ENCODE measurements at regions of chr14 and their contacts with region 1.

Region 1: DNA sequence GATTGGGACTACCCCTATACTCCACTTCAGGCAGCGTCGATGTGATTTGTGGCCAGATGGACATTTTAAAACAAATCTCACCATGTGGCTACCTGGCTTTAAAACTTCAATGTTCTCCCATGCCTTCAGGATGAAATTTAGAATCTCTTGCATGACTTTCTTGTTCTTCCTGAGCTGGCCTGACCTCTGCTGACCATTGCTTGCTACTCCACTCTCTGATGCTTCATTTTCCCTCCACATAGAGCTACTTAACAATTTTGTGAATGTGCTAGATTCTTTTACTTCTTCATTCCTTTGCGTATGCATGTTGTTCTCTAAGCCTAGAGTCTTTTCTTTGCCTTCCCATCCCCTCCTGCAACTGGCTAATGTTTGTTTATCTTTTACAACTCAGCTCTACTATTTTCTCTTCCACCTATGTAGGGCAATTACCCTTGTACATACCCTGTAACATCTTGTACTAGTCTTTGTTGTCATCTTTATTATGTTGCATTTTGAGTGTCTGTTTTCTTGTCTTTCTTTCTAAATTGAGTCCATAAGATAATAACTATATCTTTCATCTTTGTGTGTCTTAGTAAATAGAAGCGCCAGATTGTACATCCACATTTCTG is 41.2 kb downstream of the YLPM1 start:
- DNase-seq: peak; percentile 59 to 65
- H3K4me3 ChIP-seq: no peak overlapping the region
- H3K27ac ChIP-seq: no peak overlapping the region
- H3K4me1 ChIP-seq: no peaks in the 10 kb centered on the region
- H3K27me3 ChIP-seq: no peaks in the 10 kb centered on the region
- CTCF ChIP-seq: peak; percentile 89

Region 2: GRCh38 chr14:74324931-74325361 is 479.4 kb before region 1 on chr14:
- CTCF ChIA-PET with region 1: no interaction called
- POLR2A ChIA-PET with region 1: no interaction called
- intact Hi-C with region 1: loop called (anchors 1 kb)
- DNase-seq: peak in 1 of 2 experiments; percentile 39
- H3K4me3 ChIP-seq: no peak overlapping the region
- H3K27ac ChIP-seq: no peak overlapping the region
- H3K4me1 ChIP-seq: no peaks in the 10 kb centered on the region
- H3K27me3 ChIP-seq: no peaks in the 10 kb centered on the region
- CTCF ChIP-seq: peak; percentile 95

Region 3: DNA sequence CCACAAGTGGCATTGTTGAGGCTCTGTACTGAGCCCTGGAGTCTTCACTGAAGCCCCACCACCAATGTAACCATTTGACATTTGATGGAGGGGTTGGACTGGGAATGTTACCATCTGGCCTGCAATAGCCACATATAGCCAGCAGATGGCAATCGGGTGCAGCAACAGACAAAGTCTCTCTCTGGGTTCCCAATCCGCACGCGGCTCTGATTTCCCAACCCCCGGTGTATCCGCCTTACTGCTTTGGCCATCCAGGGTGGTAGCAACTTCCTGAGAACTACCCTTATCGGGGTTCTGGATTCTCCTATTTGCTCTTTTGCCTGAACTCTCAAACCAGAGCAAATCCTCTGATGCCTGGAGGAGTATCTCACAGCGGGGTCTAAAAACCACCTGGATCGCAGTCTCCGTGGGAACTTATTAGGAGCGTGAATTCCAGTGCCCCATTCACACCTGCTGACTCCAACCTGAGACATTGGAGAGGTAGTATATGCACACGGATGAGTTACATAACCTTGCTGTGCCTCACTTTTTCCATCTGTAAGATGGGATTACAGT is 441.9 kb before region 1 on chr14:
- CTCF ChIA-PET with region 1: no interaction called
- POLR2A ChIA-PET with region 1: no interaction called
- intact Hi-C with region 1: loop called (anchors 1 kb)
- DNase-seq: peak; percentile 72 to 92
- H3K4me3 ChIP-seq: no peak overlapping the region
- H3K27ac ChIP-seq: no peak overlapping the region
- H3K4me1 ChIP-seq: no peaks in the 10 kb centered on the region
- H3K27me3 ChIP-seq: no peaks in the 10 kb centered on the region
- CTCF ChIP-seq: peak; percentile 100

Region 4: GRCh38 chr14:74501135-74501614 is 303.1 kb before region 1 on chr14:
- CTCF ChIA-PET with region 1: no interaction called
- POLR2A ChIA-PET with region 1: no interaction called
- intact Hi-C with region 1: loop called (anchors 2 kb)
- DNase-seq: peak in 1 of 2 experiments; percentile 42
- H3K4me3 ChIP-seq: no peak overlapping the region
- H3K27ac ChIP-seq: no peak overlapping the region
- H3K4me1 ChIP-seq: peaks cover 11% of the 10 kb centered on the region
- H3K27me3 ChIP-seq: no peaks in the 10 kb centered on the region
- CTCF ChIP-seq: peak; percentile 47; the same call in 1 of the 2 replicates

Region 5: DNA sequence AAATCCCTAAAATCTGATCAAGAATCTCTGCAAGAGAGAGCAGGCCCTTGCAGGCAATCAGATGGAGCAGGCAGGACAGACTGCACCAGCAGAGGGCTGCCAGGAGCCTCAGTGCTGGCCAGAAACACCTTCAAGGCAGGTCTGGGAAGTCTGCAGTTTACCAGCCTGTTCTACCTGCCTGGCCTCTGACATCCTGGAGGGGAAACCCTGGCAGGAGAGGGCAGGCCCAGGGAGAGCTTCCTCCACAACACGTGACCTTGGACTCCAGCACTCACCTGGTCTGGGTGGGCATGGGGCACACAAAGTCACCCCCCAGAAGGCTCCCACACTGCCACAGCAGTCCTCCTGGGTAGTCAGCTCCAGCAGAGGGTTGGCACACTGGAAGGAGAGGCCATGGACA is 254.7 kb before region 1 on chr14:
- CTCF ChIA-PET with region 1: interaction called, 7 read pairs
- POLR2A ChIA-PET with region 1: no interaction called
- intact Hi-C with region 1: loop called (anchors 1 kb)
- DNase-seq: peak; percentile 74 to 85
- H3K4me3 ChIP-seq: no peak overlapping the region
- H3K27ac ChIP-seq: peak overlapping the region; percentile 14
- H3K4me1 ChIP-seq: peaks cover 13% of the 10 kb centered on the region
- H3K27me3 ChIP-seq: no peaks in the 10 kb centered on the region
- CTCF ChIP-seq: peak; percentile 88

Region 6: DNA sequence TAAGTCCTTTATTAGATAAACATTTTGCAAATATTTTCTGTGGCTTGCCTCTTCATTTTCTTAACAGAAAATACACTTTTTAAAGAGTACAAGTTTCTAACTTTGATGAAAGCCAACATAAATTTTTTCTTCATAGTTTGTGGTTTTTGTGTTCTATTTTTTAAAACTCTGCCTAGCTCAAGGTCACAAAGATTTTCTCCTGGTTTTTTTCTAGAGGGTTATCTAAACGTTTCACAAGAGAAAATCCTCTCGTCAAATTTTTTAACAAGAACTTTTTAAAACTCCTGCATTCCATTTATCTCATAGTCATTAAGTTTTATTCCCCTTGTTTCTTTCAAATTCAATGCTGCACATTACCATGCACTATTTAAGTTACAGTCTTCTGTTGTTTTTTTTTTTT is 99.7 kb before region 1 on chr14:
- CTCF ChIA-PET with region 1: no interaction called
- POLR2A ChIA-PET with region 1: no interaction called
- intact Hi-C with region 1: no loop called
- DNase-seq: no peak
- H3K4me3 ChIP-seq: no peak overlapping the region
- H3K27ac ChIP-seq: no peak overlapping the region
- H3K4me1 ChIP-seq: no peaks in the 10 kb centered on the region
- H3K27me3 ChIP-seq: no peaks in the 10 kb centered on the region
- CTCF ChIP-seq: no peak

Region 7: DNA sequence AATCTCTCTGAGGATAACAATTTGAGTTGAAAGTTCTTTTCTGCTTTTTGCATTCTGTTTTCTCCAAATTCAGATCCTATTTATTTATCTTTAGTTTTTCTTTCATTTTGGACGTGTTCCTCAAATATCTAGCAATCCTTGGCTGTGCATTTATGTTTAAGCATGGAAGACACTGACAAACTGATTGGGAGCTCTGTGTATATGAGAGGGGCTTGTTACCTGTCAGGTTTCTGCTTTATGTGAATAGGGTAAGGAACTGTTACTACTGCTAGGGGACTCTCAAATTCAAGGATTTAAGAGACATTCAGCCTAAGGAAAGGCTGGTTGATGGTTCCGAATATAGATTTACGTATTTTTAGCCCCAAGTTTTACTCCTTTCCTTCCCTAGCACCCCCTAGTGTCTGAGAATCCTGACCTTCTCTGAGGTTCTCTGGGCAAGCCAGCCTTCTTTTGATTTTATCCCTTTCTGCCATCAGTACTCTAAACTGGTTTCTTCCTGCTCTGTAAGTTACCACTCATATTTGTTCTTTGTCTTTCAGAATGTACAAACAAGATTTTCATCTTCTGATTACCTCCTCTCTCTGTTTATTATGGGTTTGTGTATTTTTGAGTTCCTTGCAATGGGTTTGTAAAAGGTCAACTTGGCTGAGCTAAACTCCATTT is 10.7 kb before region 1 on chr14:
- CTCF ChIA-PET with region 1: interaction called, 3 read pairs
- POLR2A ChIA-PET with region 1: interaction called, 12 read pairs
- intact Hi-C with region 1: no loop called
- DNase-seq: no peak
- H3K4me3 ChIP-seq: no peak overlapping the region
- H3K27ac ChIP-seq: no peak overlapping the region
- H3K4me1 ChIP-seq: no peaks in the 10 kb centered on the region
- H3K27me3 ChIP-seq: no peaks in the 10 kb centered on the region
- CTCF ChIP-seq: peak; percentile 58; the same call in 1 of the 2 replicates

Region 8: GRCh38 chr14:74824997-74825396 is 20.7 kb after region 1 on chr14:
- CTCF ChIA-PET with region 1: no interaction called
- POLR2A ChIA-PET with region 1: no interaction called
- intact Hi-C with region 1: no loop called
- DNase-seq: no peak
- H3K4me3 ChIP-seq: no peak overlapping the region
- H3K27ac ChIP-seq: no peak overlapping the region
- H3K4me1 ChIP-seq: no peaks in the 10 kb centered on the region
- H3K27me3 ChIP-seq: no peaks in the 10 kb centered on the region
- CTCF ChIP-seq: no peak

Region 9: GRCh38 chr14:74881431-74882361 is 77.4 kb after region 1 on chr14 and contains the start of gene DLST:
- CTCF ChIA-PET with region 1: no interaction called
- POLR2A ChIA-PET with region 1: no interaction called
- intact Hi-C with region 1: no loop called
- DNase-seq: peak; percentile 78 to 99
- H3K4me3 ChIP-seq: peak within 1 kb of the TSS; percentile 75
- H3K27ac ChIP-seq: peak within 1 kb of the TSS; percentile 17
- H3K4me1 ChIP-seq: peaks cover 49% of the 10 kb centered on the region
- H3K27me3 ChIP-seq: no peaks in the 10 kb centered on the region
- CTCF ChIP-seq: no peak
- total RNA-seq, gene DLST: 309 and 320 TPM in 2 replicates

Region 10: DNA sequence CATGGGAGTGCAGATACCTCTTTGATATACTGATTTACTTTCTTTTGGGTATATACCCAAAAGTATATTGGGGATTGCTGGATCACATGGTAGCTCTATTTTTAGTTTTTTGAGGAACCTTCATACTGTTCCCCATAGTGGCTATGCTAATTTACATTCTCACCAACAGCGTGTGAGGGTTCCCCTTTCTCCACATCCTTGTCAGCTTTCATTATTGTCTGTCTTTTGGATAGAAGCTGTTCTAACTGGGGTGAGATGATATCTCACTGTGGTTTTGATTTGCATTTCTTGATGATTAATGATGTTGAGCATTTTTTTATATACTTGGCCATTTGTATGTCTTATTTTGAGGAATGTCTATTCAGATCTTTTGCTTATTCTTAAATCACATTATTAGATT is 579.4 kb after region 1 on chr14:
- CTCF ChIA-PET with region 1: no interaction called
- POLR2A ChIA-PET with region 1: no interaction called
- intact Hi-C with region 1: no loop called
- DNase-seq: no peak
- H3K4me3 ChIP-seq: no peak overlapping the region
- H3K27ac ChIP-seq: no peak overlapping the region
- H3K4me1 ChIP-seq: no peaks in the 10 kb centered on the region
- H3K27me3 ChIP-seq: no peaks in the 10 kb centered on the region
- CTCF ChIP-seq: no peak